ENCODE measurements at regions of chr2 and their contacts with region 1.

Region 1: GRCh38 chr2:69634196-69634821 is 9.2 kb downstream of the AAK1 start:
- DNase-seq: no peak
- H3K4me3 ChIP-seq: no peak overlapping the region
- H3K27ac ChIP-seq: no peak overlapping the region
- H3K4me1 ChIP-seq: peaks cover 0 to 40% (median 11%) of the 10 kb centered on the region in 4 donors
- H3K27me3 ChIP-seq: no peaks in the 10 kb centered on the region
- CTCF ChIP-seq: no peak

Region 2: GRCh38 chr2:69581774-69582581 is 52.3 kb before region 1 on chr2:
- intact Hi-C with region 1: loop called (anchors 10 kb)
- DNase-seq: no peak
- H3K4me3 ChIP-seq: no peak overlapping the region
- H3K27ac ChIP-seq: no peak overlapping the region
- H3K4me1 ChIP-seq: peaks cover 0 to 33% (median 24%) of the 10 kb centered on the region in 4 donors
- H3K27me3 ChIP-seq: no peaks in the 10 kb centered on the region
- CTCF ChIP-seq: no peak